GM13977 (cell line): ENCODE measurements at regions of chr10 and their contacts with region 1.

Region 1: GRCh38 chr10:63629363-63630084 is 108.3 kb downstream of the REEP3 start:
- DNase-seq: peak; percentile 66
- CTCF ChIP-seq: peak; percentile 80

Region 2: DNA sequence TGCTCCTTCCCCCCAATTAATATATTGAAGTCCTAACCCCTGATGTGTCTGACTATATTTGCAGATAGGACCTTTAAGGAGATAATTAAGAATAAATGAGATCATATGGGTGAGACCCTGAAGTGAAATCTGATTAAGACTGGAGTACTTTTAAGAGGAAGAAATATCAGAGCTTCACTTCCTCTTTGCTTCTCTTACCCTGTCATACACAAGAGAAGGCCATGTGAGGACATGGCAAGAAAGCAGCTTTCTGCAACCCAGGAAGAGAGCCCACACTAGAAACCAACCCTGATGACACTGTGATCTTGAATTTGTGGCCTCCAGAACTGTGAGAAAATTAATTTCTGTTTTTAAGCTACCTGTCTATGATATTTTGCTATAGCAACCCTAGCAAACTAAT is 207.9 kb before region 1 on chr10:
- in situ Hi-C with region 1: no loop called
- DNase-seq: peak; percentile 45
- CTCF ChIP-seq: no peak

Region 3: GRCh38 chr10:63537536-63537935 is 92.0 kb before region 1 on chr10:
- in situ Hi-C with region 1: loop called (anchors 10 kb)
- DNase-seq: no peak
- CTCF ChIP-seq: no peak

Region 4: GRCh38 chr10:63583909-63584724 is 45.4 kb before region 1 on chr10:
- in situ Hi-C with region 1: no loop called
- DNase-seq: no peak
- CTCF ChIP-seq: no peak

Region 5: GRCh38 chr10:63711867-63712716 is 82.6 kb after region 1 on chr10:
- in situ Hi-C with region 1: loop called (anchors 10 kb)
- DNase-seq: no peak
- CTCF ChIP-seq: no peak